ENCODE measurements at regions of chr6 and their contacts with region 1.

Region 1: GRCh38 chr6:37005061-37005810 is at the start of gene FGD2:
- DNase-seq: peak; percentile 89
- ATAC-seq: peak; percentile 72
- H3K4me3 ChIP-seq: peak within 1 kb of the TSS; percentile 82 to 97 (median 89)
- H3K4me3 Mint-ChIP-seq: peak within 1 kb of the TSS; percentile 96
- H3K27ac ChIP-seq: peak within 1 kb of the TSS; percentile 80 to 92
- H3K27ac Mint-ChIP-seq: peak within 1 kb of the TSS; percentile 95
- H3K4me1 ChIP-seq: peaks cover 56 to 79% of the 10 kb centered on the region in 2 donors
- H3K4me1 Mint-ChIP-seq: peaks cover 82% of the 10 kb centered on the region
- H3K27me3 ChIP-seq: no peaks in the 10 kb centered on the region
- H3K27me3 Mint-ChIP-seq: no peaks in the 10 kb centered on the region
- CTCF ChIP-seq: no peak
- total RNA-seq, gene FGD2: 352 and 360 TPM in 2 replicates

Region 2: GRCh38 chr6:36874443-36875249 is 130.6 kb before region 1 on chr6 and contains the start of gene PPIL1:
- CTCF ChIA-PET with region 1: interaction called, 4 read pairs
- POLR2A ChIA-PET with region 1: no interaction called
- intact Hi-C with region 1: loop called (anchors 1 kb)
- DNase-seq: peak; percentile 96
- ATAC-seq: peak; percentile 93
- H3K4me3 ChIP-seq: peak within 1 kb of the TSS; percentile 73 to 100 (median 99)
- H3K4me3 Mint-ChIP-seq: peak within 1 kb of the TSS; percentile 99
- H3K27ac ChIP-seq: peak within 1 kb of the TSS; percentile 63 to 89
- H3K27ac Mint-ChIP-seq: peak within 1 kb of the TSS; percentile 97
- H3K4me1 ChIP-seq: peaks cover 12 to 15% of the 10 kb centered on the region in 2 donors
- H3K4me1 Mint-ChIP-seq: peaks cover 32% of the 10 kb centered on the region
- H3K27me3 ChIP-seq: peaks cover 0 to 3% (median under 1%) of the 10 kb centered on the region in 4 experiments
- H3K27me3 Mint-ChIP-seq: no peaks in the 10 kb centered on the region
- CTCF ChIP-seq: no peak
- total RNA-seq, gene PPIL1: 7.0 and 10.5 TPM in 2 replicates

Region 3: DNA sequence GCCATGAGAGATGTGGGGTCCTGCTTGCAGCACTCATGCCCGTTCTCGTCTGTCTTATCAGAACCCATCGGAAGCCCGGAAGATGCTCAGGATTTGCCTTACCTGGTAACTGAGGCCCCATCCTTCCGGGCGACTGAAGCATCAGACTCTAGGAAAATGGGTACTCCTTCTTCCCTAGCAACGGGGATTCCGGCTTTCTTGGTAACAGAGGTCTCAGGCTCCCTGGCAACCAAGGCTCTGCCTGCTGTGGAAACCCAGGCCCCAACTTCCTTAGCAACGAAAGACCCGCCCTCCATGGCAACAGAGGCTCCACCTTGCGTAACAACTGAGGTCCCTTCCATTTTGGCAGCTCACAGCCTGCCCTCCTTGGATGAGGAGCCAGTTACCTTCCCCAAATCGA is 42.4 kb before region 1 on chr6:
- CTCF ChIA-PET with region 1: no interaction called
- POLR2A ChIA-PET with region 1: interaction called, 4 read pairs
- intact Hi-C with region 1: loop called (anchors 2 kb)
- DNase-seq: peak; percentile 89
- ATAC-seq: peak; percentile 75
- H3K4me3 ChIP-seq: peak overlapping the region in 4 of 5 experiments; percentile 10 to 25 (median 20)
- H3K4me3 Mint-ChIP-seq: peak overlapping the region; percentile 75
- H3K27ac ChIP-seq: peak overlapping the region; percentile 58 to 61
- H3K27ac Mint-ChIP-seq: peak overlapping the region; percentile 92
- H3K4me1 ChIP-seq: peaks cover 22 to 30% of the 10 kb centered on the region in 2 donors
- H3K4me1 Mint-ChIP-seq: peaks cover 35% of the 10 kb centered on the region
- H3K27me3 ChIP-seq: no peaks in the 10 kb centered on the region
- H3K27me3 Mint-ChIP-seq: no peaks in the 10 kb centered on the region
- CTCF ChIP-seq: no peak

Region 4: DNA sequence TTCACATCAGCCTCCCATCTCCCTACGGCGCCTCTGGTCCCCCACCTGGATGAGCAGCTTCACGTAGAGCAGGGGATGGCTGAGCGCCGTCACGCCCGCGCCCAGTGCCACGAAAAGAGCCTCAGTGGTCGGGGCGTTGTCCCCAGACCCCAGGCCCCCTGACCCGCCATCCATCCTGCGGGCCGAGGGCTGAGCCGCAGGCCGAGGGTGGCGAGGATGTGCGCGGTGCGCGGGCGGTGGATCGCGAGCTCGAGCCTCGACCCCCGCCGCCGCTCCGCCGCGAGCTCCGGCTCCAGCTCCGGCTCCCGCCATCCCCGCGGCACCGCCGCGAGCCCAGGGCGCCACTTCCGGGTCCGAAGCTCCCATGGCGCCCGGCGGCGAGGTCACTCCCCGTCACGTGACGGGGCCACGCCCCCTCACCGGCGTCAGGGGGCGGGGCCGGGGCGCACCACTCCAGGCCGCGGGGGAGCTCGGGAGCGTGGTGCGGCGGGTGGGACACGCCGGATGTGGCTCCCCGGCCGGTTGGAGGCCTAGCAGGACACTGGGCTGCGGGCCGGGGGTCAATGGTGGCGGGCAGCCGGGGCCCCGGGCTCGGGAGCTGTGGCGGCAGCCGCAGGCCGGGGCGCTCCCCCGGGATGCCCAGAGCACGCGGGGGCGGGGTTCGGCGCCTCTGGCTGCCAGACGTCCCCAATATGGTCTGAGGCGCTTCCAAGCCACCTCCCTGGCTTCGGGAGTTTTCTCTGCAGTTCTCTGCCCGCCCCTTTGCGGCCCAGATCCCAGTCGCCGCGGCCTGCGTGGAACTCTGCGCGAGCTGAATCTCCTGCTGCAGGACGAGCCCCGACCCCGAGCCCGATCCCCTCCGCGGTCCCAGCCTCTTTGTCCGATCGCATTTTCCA is 19.2 kb before region 1 on chr6 and contains the start of gene MTCH1:
- CTCF ChIA-PET with region 1: interaction called, 16 read pairs
- POLR2A ChIA-PET with region 1: interaction called, 40 read pairs
- intact Hi-C with region 1: loop called (anchors 1 kb)
- DNase-seq: peak; percentile 96
- ATAC-seq: peak; percentile 88
- H3K4me3 ChIP-seq: peak within 1 kb of the TSS; percentile 66 to 98 (median 88)
- H3K4me3 Mint-ChIP-seq: peak within 1 kb of the TSS; percentile 96
- H3K27ac ChIP-seq: peak within 1 kb of the TSS; percentile 53 to 89
- H3K27ac Mint-ChIP-seq: peak within 1 kb of the TSS; percentile 98
- H3K4me1 ChIP-seq: peaks cover 33 to 35% of the 10 kb centered on the region in 2 donors
- H3K4me1 Mint-ChIP-seq: peaks cover 24% of the 10 kb centered on the region
- H3K27me3 ChIP-seq: no peaks in the 10 kb centered on the region
- H3K27me3 Mint-ChIP-seq: no peaks in the 10 kb centered on the region
- CTCF ChIP-seq: no peak
- total RNA-seq, gene MTCH1: 150 and 160 TPM in 2 replicates

Region 5: GRCh38 chr6:37177077-37177934 is 172.1 kb after region 1 on chr6:
- CTCF ChIA-PET with region 1: interaction called, 24 read pairs
- POLR2A ChIA-PET with region 1: interaction called, 9 read pairs
- intact Hi-C with region 1: no loop called
- DNase-seq: peak; percentile 86
- ATAC-seq: peak; percentile 74
- H3K4me3 ChIP-seq: peak overlapping the region in 2 of 5 experiments; percentile 12 to 25
- H3K4me3 Mint-ChIP-seq: peak overlapping the region; percentile 80
- H3K27ac ChIP-seq: no peak overlapping the region
- H3K27ac Mint-ChIP-seq: peak overlapping the region; percentile 83
- H3K4me1 ChIP-seq: peaks cover 56 to 58% of the 10 kb centered on the region in 2 donors
- H3K4me1 Mint-ChIP-seq: peaks cover 60% of the 10 kb centered on the region
- H3K27me3 ChIP-seq: no peaks in the 10 kb centered on the region
- H3K27me3 Mint-ChIP-seq: no peaks in the 10 kb centered on the region
- CTCF ChIP-seq: peak; percentile 36

Region 6: DNA sequence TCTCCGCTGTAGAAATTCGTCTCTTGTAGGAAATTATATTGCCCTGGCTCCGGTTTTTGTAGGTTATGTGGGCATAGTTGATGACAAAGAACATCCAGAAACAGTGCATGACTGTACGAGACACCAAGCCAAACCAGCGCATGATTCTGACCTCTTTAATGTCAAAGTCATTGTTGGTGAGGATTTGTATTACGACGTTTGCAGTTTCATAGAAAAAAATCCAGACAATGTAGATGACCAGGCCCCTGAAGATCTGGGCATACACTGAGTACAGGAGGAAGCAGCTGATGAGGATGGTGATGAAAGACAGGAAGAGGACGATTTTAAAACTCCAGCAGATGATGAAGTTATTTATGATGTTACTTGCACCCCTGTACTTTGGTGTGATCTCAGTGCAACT is 213.3 kb after region 1 on chr6:
- CTCF ChIA-PET with region 1: no interaction called
- POLR2A ChIA-PET with region 1: no interaction called
- intact Hi-C with region 1: no loop called
- DNase-seq: no peak
- ATAC-seq: no peak
- H3K4me3 ChIP-seq: no peak overlapping the region
- H3K4me3 Mint-ChIP-seq: no peak overlapping the region
- H3K27ac ChIP-seq: no peak overlapping the region
- H3K27ac Mint-ChIP-seq: no peak overlapping the region
- H3K4me1 ChIP-seq: peaks cover 5 to 12% of the 10 kb centered on the region in 2 donors
- H3K4me1 Mint-ChIP-seq: peaks cover 11% of the 10 kb centered on the region
- H3K27me3 ChIP-seq: no peaks in the 10 kb centered on the region
- H3K27me3 Mint-ChIP-seq: no peaks in the 10 kb centered on the region
- CTCF ChIP-seq: no peak

Measured in B cell (primary cell).